Posterior vena cava (tissue), 2 donors: ENCODE measurements at regions of chr14 and their contacts with region 1.

Region 1: GRCh38 chr14:104078031-104078455 is 7.5 kb upstream of the ASPG start:
- DNase-seq: peak; percentile 94

Region 2: DNA sequence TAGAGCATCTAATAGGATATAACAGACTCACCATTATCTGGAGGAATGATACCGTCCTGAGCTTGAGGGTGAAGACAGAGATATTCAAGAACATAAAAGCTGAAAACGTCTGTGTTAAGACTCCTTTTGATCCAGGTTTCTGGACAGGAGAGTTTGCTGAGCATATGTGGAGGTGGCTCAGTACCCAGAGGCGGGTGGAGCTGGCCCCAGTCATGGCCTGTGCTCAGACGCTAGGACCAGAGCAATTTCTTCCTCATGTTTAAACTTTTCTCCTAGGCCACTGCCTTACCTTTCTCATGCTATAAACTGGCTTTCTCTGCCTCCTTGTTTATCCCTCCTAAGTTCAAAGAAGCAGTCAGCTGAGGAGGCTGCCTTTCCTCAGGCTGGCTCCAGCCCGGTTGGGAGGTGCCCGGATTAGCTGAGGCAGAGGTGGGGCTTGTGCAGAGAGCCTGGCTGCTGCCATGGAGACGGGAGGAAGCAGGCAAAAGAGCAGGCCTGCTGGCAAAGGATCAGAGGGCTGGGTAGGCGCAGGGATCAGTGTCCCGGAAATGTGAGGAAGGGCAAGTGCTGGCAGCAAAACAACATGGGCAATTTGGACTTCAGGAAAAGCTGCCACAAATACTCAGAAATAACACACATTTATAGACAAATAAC is 501.5 kb before region 1 on chr14:
- intact Hi-C with region 1: no loop called
- DNase-seq: peak; percentile 95

Region 3: GRCh38 chr14:104130974-104131651 is 53.1 kb after region 1 on chr14:
- intact Hi-C with region 1: loop called in 1 of 2 experiments (anchors 5 kb)
- DNase-seq: peak; percentile 67